Heart left ventricle (tissue), 16 donors: ENCODE measurements at regions of chr7 and their contacts with region 1.

Region 1: DNA sequence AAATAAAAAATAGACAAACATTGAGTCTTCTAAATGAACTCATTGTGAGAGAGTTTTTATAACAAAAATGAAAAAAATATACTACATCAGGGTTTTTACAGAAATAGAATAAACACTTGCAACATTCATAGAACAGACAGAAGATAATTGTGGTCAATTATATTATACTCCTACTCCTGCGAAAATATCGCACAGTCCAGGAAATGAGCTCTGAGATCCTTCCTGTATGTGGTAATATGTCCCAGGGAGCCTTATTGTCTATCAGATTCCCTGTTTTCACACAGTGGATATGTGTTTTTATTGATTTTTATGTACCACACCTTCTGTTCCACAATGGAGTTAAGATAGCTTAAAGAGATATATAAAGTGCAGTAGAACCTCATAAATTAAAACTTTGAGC is 27.5 kb upstream of the RELN start:
- DNase-seq: no peak
- ATAC-seq: no peak
- H3K4me3 ChIP-seq: no peak overlapping the region
- H3K27ac ChIP-seq: no peak overlapping the region
- H3K4me1 ChIP-seq: no peaks in the 10 kb centered on the region
- H3K27me3 ChIP-seq: no peaks in the 10 kb centered on the region
- CTCF ChIP-seq: no peak
- POLR2A ChIP-seq: no peak

Region 2: DNA sequence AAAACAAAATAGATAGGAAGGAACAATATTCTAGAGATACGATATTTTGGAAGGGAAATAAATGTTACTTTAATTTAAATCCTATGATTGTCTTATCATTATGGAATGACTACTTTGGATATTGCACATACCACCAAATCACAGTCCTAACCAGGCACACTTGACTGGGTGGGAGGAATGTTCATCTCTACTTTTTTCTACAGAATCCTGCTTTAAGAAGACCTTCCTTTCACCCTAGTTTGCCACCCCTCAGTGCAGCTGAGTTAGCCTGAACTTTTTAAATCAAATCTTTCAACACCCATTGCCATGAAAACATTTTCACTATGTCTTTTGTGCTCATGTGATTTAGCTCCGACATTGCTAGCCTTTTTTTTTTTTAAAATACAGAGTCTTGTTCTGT is 65.7 kb before region 1 on chr7:
- intact Hi-C with region 1: loop called in 1 of 10 experiments (anchors 10 kb)
- DNase-seq: no peak
- ATAC-seq: no peak
- H3K4me3 ChIP-seq: no peak overlapping the region
- H3K27ac ChIP-seq: no peak overlapping the region
- H3K4me1 ChIP-seq: no peaks in the 10 kb centered on the region
- H3K27me3 ChIP-seq: no peaks in the 10 kb centered on the region
- CTCF ChIP-seq: no peak
- POLR2A ChIP-seq: no peak